GM12878 (cell line): ENCODE measurements at regions of chr17 and their contacts with region 1.

Region 1: DNA sequence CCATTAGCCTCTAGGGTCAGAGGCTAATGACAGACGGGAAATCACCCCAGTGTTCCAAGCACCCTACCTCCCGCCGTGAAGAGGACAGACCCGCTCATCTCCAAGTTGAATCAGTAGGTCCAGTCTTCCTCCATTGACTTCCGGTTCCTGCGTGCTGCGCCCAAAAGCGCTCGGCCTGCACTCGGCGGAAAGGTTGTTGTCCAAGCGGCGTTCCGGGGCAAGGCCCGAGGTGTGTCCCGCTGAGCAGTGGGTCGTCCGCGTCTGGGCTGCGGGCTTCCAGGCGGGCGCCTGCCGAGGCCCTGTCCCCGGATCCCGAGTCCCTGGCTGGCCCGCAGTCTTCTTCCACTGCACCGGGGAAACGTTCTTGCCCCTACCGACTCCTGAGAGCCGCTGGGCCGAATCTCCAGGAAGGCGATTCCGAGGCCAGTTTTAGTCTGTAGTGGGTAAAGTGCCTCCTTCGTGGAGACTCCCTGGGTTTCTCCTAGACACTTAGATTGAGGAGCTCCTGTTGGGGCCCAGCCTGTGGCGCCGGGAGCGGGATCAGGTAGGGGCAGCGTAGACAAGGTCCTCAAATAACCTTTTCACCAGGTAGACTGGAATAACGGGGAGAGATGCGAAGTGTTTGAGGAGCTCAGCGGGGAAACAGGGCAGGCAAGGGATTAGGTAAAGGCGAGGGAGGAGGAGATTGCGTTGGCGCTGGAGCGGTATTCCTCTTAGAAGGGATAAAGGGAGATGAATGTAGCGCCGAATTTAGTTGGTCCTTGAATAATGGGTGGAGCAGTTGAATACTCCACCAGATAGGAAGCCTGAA is at the start of gene TEFM:
- DNase-seq: peak; percentile 80
- ATAC-seq: peak; percentile 96
- H3K4me3 ChIP-seq: peak within 1 kb of the TSS; percentile 95
- H3K27ac ChIP-seq: peak within 1 kb of the TSS; percentile 72
- H3K4me1 ChIP-seq: peaks cover 10% of the 10 kb centered on the region
- H3K27me3 ChIP-seq: no peaks in the 10 kb centered on the region
- CTCF ChIP-seq: no peak
- EP300 ChIP-seq: no peak
- POLR2A ChIP-seq: peak; percentile 96
- RAD21 ChIP-seq: peak; percentile 33; the same call in 1 of the 2 replicates
- polyA plus RNA-seq, gene TEFM: 36.3 to 57.1 TPM

Region 2: DNA sequence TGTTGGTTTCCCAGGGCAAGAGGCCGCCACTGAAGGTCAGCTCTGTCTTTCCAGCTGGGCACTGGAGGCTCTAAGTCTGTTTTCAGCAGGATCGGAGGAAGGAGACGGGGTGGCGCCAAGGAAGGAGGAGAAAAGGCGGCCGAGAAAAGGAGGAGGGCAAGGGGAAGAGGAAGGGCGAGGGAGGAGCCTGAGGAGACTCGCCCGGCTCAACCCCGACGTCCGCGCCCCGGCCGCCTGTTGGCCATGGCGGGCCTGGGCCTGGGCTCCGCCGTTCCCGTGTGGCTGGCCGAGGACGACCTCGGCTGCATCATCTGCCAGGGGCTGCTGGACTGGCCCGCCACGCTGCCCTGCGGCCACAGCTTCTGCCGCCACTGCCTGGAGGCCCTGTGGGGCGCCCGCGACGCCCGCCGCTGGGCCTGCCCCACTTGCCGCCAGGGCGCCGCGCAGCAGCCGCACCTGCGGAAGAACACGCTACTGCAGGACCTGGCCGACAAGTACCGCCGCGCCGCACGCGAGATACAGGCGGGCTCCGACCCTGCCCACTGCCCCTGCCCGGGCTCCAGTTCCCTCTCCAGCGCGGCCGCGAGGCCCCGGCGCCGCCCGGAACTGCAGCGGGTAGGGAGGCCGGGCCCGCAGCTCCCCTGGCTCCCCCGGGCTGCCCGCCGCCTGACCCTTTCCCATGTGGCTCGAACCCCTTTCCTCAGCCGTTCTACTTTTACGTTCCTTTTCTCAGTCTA is 64.7 kb after region 1 on chr17 and contains the start of gene RNF135:
- CTCF ChIA-PET with region 1: no interaction called
- POLR2A ChIA-PET with region 1: interaction called, 4 read pairs
- RAD21 ChIA-PET with region 1: interaction called, 7 read pairs
- SMC1A ChIA-PET with region 1: interaction called, 3 read pairs
- in situ Hi-C with region 1: no loop called
- intact Hi-C with region 1: loop called (anchors 1 kb)
- DNase-seq: no peak
- ATAC-seq: peak; percentile 84
- H3K4me3 ChIP-seq: peak within 1 kb of the TSS; percentile 87
- H3K27ac ChIP-seq: peak within 1 kb of the TSS; percentile 97
- H3K4me1 ChIP-seq: peaks cover 15% of the 10 kb centered on the region
- H3K27me3 ChIP-seq: no peaks in the 10 kb centered on the region
- CTCF ChIP-seq: peak in 2 of 3 experiments; percentile 2 to 25; a peak in 1 of 6 replicates
- EP300 ChIP-seq: no peak
- POLR2A ChIP-seq: peak; percentile 90
- RAD21 ChIP-seq: no peak
- polyA plus RNA-seq, gene RNF135: 12.8 to 15.4 TPM

Region 3: GRCh38 chr17:31008374-31009041 is 102.2 kb after region 1 on chr17:
- CTCF ChIA-PET with region 1: no interaction called
- POLR2A ChIA-PET with region 1: no interaction called
- RAD21 ChIA-PET with region 1: no interaction called
- SMC1A ChIA-PET with region 1: interaction called, 3 read pairs
- in situ Hi-C with region 1: no loop called
- intact Hi-C with region 1: loop called (anchors 2 kb)
- DNase-seq: no peak
- ATAC-seq: peak; percentile 89
- H3K4me3 ChIP-seq: peak overlapping the region; percentile 74
- H3K27ac ChIP-seq: peak overlapping the region; percentile 42; the same call in 1 of the 2 replicates
- H3K4me1 ChIP-seq: no peaks in the 10 kb centered on the region
- H3K27me3 ChIP-seq: no peaks in the 10 kb centered on the region
- CTCF ChIP-seq: no peak
- EP300 ChIP-seq: no peak
- POLR2A ChIP-seq: peak; percentile 80
- RAD21 ChIP-seq: no peak

Region 4: GRCh38 chr17:31074772-31075555 is 168.7 kb after region 1 on chr17:
- CTCF ChIA-PET with region 1: no interaction called
- POLR2A ChIA-PET with region 1: no interaction called
- RAD21 ChIA-PET with region 1: no interaction called
- SMC1A ChIA-PET with region 1: no interaction called
- in situ Hi-C with region 1: no loop called
- intact Hi-C with region 1: loop called (anchors 10 kb)
- DNase-seq: no peak
- ATAC-seq: no peak
- H3K4me3 ChIP-seq: no peak overlapping the region
- H3K27ac ChIP-seq: no peak overlapping the region
- H3K4me1 ChIP-seq: no peaks in the 10 kb centered on the region
- H3K27me3 ChIP-seq: no peaks in the 10 kb centered on the region
- CTCF ChIP-seq: no peak
- EP300 ChIP-seq: no peak
- POLR2A ChIP-seq: no peak
- RAD21 ChIP-seq: no peak